ENCODE measurements at regions of chr12 and their contacts with region 1.

Region 1: GRCh38 chr12:93894391-93895088 is 217.4 kb downstream of the CRADD start:
- DNase-seq: peak; percentile 94
- ATAC-seq: peak; percentile 92

Region 2: DNA sequence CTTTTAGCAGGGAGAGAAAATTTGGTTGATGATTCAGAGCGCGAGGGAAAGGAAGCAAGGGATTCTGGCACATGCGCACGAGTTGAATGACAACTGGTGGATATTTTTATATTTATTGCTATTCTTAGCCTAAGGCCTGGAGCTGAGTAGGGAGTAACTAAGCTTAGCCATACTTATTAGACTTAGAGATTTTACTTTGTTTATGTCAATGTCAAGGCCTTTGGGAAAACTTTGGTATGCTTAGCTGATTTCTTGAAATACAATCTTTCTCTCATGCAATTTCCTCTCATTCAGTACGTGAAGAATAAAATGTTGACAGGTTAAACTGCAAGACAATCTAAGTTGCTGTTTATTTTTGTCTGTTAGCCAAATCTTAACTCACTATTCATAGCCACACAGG is 116.2 kb before region 1 on chr12:
- intact Hi-C with region 1: loop called (anchors 10 kb)
- DNase-seq: peak; percentile 52
- ATAC-seq: peak; percentile 91

Region 3: GRCh38 chr12:94047741-94048567 is 153.4 kb after region 1 on chr12:
- intact Hi-C with region 1: no loop called
- DNase-seq: no peak
- ATAC-seq: peak; percentile 88

Measured in Right ventricle myocardium superior (tissue), 1 donor.